H1 (cell line): ENCODE measurements at regions of chr11 and their contacts with region 1.

Region 1: GRCh38 chr11:44621140-44621681 is 55.7 kb downstream of the CD82 start:
- DNase-seq: peak; percentile 46 to 98
- H3K4me3 ChIP-seq: peak overlapping the region in 3 of 4 experiments; percentile 30 to 53 (median 40); a peak in 6 of 8 replicates
- H3K27ac ChIP-seq: no peak overlapping the region
- H3K4me1 ChIP-seq: peaks cover 0 to 3% (median 0%) of the 10 kb centered on the region in 4 experiments; a peak in 3 of 7 replicates
- H3K27me3 ChIP-seq: peaks cover 0 to 9% (median 7%) of the 10 kb centered on the region in 4 experiments; a peak in 4 of 7 replicates
- CTCF ChIP-seq: peak; percentile 92 to 96 (median 95)
- EP300 ChIP-seq: no peak
- POLR2A ChIP-seq: no peak
- RAD21 ChIP-seq: peak; percentile 98 to 99

Region 2: GRCh38 chr11:44556735-44557409 is 64.3 kb before region 1 on chr11:
- CTCF ChIA-PET with region 1: interaction called, 182 read pairs
- POLR2A ChIA-PET with region 1: interaction called, 6 read pairs
- DNase-seq: peak in 1 of 2 experiments; percentile 71
- H3K4me3 ChIP-seq: no peak overlapping the region
- H3K27ac ChIP-seq: no peak overlapping the region
- H3K4me1 ChIP-seq: peaks cover 6 to 16% (median 12%) of the 10 kb centered on the region in 4 experiments; a peak in 6 of 7 replicates
- H3K27me3 ChIP-seq: peaks cover 0 to 2% (median 0%) of the 10 kb centered on the region in 4 experiments; a peak in 1 of 7 replicates
- CTCF ChIP-seq: peak; percentile 63 to 72 (median 71)
- EP300 ChIP-seq: no peak
- POLR2A ChIP-seq: no peak
- RAD21 ChIP-seq: peak; percentile 83 to 85

Region 3: DNA sequence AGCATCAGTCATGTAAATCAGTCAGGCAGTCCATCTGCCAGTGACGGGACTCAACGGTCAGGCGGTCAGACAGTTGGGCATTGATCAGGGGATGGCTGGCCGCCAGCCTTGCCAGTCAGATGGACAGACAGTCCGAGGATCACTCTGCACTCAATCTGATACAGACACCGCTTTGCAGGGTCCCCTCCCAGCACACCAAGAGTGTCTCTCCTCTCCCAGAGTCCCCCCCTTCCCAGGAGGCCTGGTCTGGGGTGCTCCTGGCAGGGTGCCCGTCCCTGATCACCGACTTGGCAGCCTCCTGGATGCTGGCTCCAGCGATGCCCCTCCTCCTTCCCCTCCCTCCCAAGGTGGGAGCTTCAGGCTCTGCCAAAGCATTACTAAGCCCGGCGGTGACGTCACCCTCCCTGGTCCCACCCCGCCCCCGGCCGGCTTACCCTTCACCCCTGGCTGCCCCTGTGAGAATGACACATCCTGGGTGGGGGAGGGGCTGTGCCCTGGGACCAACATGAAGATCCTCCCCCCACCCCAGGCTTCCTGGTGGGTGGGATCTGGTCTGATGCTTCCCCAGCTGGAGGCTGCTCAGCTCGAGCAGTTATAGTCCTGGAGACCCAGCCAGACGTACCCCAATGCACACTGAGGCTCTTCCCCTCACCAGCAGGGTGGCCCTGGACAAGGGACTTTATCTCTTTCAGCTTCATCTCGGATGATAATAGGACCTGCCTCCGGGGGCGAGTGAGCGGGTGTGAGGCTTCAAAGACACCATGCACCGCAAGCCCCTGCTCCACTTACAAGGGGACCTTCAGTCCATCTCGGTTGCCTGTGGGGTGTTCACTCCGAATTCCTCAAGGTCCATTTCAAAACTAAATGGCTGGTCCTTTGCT is 13.4 kb after region 1 on chr11:
- CTCF ChIA-PET with region 1: interaction called, 33 read pairs
- POLR2A ChIA-PET with region 1: interaction called, 3 read pairs
- DNase-seq: peak in 1 of 2 experiments; percentile 63
- H3K4me3 ChIP-seq: no peak overlapping the region
- H3K27ac ChIP-seq: no peak overlapping the region
- H3K4me1 ChIP-seq: peaks cover 0 to 13% (median 6%) of the 10 kb centered on the region in 4 experiments; a peak in 6 of 7 replicates
- H3K27me3 ChIP-seq: peaks cover 0 to 2% (median 0%) of the 10 kb centered on the region in 4 experiments; a peak in 1 of 7 replicates
- CTCF ChIP-seq: no peak
- EP300 ChIP-seq: no peak; a peak in 1 of 3 replicates
- POLR2A ChIP-seq: no peak
- RAD21 ChIP-seq: no peak

Region 4: GRCh38 chr11:44760917-44761550 is 139.8 kb after region 1 on chr11:
- CTCF ChIA-PET with region 1: interaction called, 87 read pairs
- POLR2A ChIA-PET with region 1: no interaction called
- DNase-seq: peak; percentile 61 to 68
- H3K4me3 ChIP-seq: no peak overlapping the region
- H3K27ac ChIP-seq: no peak overlapping the region
- H3K4me1 ChIP-seq: peaks cover 9 to 22% (median 14%) of the 10 kb centered on the region in 4 experiments
- H3K27me3 ChIP-seq: peaks cover 0 to 9% (median 6%) of the 10 kb centered on the region in 4 experiments; a peak in 5 of 7 replicates
- CTCF ChIP-seq: peak; percentile 75 to 86 (median 85)
- EP300 ChIP-seq: no peak
- POLR2A ChIP-seq: no peak
- RAD21 ChIP-seq: peak; percentile 88 to 90

Region 5: GRCh38 chr11:44893846-44894617 is 272.8 kb after region 1 on chr11:
- CTCF ChIA-PET with region 1: interaction called, 89 read pairs
- POLR2A ChIA-PET with region 1: no interaction called
- DNase-seq: peak; percentile 79 to 92
- H3K4me3 ChIP-seq: no peak overlapping the region
- H3K27ac ChIP-seq: no peak overlapping the region
- H3K4me1 ChIP-seq: peaks cover 2 to 28% (median 9%) of the 10 kb centered on the region in 4 experiments
- H3K27me3 ChIP-seq: peaks cover 0 to 13% (median 3%) of the 10 kb centered on the region in 4 experiments; a peak in 3 of 7 replicates
- CTCF ChIP-seq: peak; percentile 96 to 99 (median 98)
- EP300 ChIP-seq: no peak
- POLR2A ChIP-seq: no peak
- RAD21 ChIP-seq: peak; percentile 98 to 100